ENCODE measurements at regions of chr12 and their contacts with region 1.

Region 1: DNA sequence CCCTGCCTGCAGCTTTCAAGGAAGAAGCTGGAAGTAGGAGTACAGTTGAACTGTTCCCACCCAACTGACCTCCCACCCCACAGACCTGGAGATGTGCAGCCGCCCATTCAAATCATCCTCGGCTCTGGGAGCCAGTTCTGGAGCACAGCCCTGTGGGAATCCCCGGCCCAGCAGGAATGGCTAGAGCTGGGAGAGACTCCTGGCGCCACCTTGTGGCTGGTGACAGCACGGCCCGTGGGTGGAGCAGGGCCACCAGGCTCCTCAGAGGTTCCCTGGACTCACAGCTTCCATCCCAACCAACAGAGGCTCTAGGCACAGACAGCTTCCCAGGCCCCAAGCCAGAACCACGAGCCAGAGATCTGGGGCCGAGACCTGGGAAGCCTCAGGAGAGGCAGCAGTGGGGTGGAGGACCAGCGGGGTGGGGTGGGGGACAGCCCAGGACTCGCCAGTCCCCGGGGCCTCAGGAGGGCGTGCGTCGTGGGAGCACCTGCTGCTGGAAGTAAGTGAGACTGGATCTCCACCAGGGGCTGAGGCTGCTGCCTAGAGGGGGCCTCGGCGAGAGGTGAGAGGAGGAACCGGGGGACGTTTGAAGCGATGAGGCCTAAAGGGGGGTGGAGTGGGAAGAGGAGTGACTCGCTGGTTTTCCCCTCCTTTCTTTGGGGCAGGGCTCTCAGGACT is 43.4 kb downstream of the RNF34 start:
- DNase-seq: peak; percentile 91
- CTCF ChIP-seq: peak; percentile 90

Region 2: GRCh38 chr12:121334513-121335343 is 108.6 kb before region 1 on chr12:
- CTCF ChIA-PET with region 1: interaction called, 31 read pairs
- POLR2A ChIA-PET with region 1: no interaction called
- DNase-seq: peak; percentile 72
- CTCF ChIP-seq: peak; percentile 88

Region 3: DNA sequence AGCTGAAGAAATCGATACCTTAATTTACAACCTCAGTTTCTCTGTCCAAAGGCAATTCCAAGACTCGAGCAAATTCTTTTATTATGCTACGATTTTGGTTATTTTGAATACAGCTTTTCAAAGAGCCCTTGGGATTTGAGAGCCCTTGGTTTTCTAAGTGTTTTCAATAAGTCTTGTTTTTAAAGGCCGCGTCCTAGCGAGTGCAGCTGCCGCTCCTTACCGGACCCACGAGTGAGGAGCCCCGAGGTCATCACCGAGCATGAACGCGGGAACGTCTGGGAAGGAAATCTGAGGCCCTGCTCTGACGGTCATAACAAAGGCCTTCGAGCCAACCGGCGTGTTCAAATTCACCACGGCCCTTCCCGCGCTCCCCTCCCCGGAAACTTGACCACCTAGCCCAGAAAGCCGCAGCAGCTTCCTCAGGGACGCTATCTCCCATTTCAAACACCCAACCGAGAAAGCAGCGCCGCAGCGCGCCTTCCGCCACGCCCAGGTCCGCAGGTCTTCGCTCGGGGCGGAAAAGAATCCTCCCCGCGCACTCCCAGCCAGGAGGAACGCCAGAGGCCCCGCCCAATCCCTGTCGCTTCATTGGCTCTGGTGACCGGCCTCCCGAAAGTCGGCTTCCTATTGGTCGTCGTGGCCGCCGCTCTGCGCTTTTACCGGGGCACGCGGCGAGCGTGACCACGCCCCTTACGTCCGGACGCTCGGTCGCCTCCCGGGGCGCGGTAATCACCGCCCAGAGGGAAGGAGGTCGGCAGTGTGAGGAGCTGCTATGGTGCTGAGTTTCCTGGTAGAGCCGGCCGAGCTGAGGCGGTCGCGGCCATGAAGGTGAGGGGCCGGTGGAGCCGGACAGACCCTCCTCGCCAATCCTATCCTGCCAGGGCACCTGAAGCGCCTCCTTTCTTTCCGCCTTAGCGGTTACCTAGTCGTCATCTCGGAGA is 43.7 kb before region 1 on chr12 and contains the start of gene RNF34:
- CTCF ChIA-PET with region 1: interaction called, 19 read pairs
- POLR2A ChIA-PET with region 1: interaction called, 4 read pairs
- DNase-seq: peak; percentile 99
- CTCF ChIP-seq: no peak

Region 4: GRCh38 chr12:121423682-121424623 is 19.4 kb before region 1 on chr12:
- CTCF ChIA-PET with region 1: interaction called, 35 read pairs
- POLR2A ChIA-PET with region 1: interaction called, 3 read pairs
- DNase-seq: no peak
- CTCF ChIP-seq: no peak

Region 5: DNA sequence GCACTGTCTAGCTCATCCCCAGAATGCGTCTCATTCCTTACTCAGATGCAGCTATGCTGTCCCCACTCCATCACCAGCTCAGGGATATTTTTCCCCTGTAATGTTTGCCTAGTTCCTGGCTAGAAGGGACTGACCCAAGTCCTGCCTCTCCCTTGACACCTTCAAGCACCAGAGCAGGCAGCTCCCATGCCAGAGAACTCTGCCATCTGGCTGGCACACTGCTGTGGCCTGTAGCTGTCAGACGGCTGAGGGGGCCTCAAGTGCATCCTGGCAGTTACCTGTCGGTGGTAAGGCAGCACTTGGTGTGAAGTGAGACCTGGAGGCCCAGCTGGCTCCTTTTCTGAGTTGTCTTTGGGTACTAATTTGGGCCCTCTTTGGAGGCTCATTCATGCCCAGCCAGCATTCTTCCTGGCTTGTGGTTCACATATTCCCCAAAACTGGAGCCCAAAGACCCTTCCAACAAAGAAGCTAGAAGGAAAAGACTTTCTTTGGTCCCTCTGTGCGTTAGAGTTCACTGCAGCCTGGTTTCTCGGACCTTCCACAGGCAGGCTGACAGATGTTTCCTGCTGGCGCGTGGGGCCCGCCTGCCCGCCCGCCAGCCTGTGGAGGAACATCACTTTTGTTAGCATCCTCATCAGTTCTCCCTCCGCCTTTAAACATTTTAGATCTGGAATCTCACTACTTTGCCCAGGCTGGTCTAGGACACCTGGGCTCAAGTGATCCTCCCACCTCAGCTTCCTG is 10.4 kb before region 1 on chr12:
- CTCF ChIA-PET with region 1: interaction called, 36 read pairs
- POLR2A ChIA-PET with region 1: interaction called, 3 read pairs
- DNase-seq: no peak
- CTCF ChIP-seq: no peak

Region 6: GRCh38 chr12:121483949-121484348 is 40.6 kb after region 1 on chr12:
- CTCF ChIA-PET with region 1: interaction called, 19 read pairs
- POLR2A ChIA-PET with region 1: no interaction called
- DNase-seq: no peak
- CTCF ChIP-seq: no peak

Measured in GM10248 (cell line).